GM12878 (cell line): ENCODE measurements at regions of chr15 and their contacts with region 1.

Region 1: DNA sequence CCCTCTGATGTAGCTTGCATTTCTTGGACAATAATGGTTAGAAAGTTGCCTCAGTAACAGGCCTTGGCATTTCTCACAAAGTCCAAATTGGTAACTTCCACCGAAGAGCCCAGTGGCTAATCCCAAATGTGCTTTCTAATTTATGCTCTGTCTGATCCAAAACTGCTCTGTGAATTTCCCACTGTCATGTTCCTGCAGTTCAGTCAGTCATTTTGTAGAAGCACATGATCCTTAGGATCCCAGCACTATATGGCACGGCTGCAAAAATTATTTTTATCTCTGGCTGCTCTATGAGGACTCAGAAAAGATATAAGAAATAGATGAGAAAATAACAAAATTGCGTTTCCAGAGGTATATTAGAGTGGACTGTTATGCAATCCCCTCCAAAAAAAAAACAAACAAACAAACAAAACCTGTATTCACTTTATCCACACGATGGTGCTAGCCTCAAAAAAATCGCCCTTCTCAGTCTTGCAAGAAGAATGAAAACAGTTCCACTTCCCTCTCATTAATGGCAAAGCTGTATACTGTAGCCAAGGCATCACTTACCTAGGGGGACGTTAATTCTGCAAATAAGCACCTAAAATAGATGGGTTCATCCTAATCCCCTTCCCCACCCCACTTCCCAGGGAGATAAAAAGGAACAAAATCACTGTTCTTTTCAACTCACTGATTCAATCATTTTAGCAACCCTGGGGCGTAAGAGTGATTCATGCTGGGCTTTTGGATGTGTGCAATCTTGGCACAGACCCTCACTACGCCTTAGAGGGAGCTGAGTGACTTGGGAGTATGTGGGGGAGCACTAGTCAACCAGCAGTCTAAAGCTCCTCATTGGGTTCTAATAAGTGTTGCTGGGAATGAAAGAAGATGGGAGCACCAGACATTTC is 61.3 kb downstream of the TMCO5A start:
- DNase-seq: peak; percentile 26
- ATAC-seq: peak; percentile 93
- H3K4me3 ChIP-seq: no peak overlapping the region
- H3K27ac ChIP-seq: no peak overlapping the region
- H3K4me1 ChIP-seq: no peaks in the 10 kb centered on the region
- H3K27me3 ChIP-seq: no peaks in the 10 kb centered on the region; a peak in 1 of 4 replicates
- CTCF ChIP-seq: peak; percentile 49 to 78 (median 54); a peak in 5 of 6 replicates
- EP300 ChIP-seq: no peak
- POLR2A ChIP-seq: no peak
- RAD21 ChIP-seq: peak; percentile 91

Region 2: GRCh38 chr15:38021259-38021658 is 25.6 kb after region 1 on chr15:
- CTCF ChIA-PET with region 1: interaction called, 11 read pairs
- POLR2A ChIA-PET with region 1: no interaction called
- RAD21 ChIA-PET with region 1: no interaction called
- SMC1A ChIA-PET with region 1: interaction called, 4 read pairs
- in situ Hi-C with region 1: no loop called
- intact Hi-C with region 1: no loop called
- DNase-seq: no peak
- ATAC-seq: peak; percentile 73
- H3K4me3 ChIP-seq: no peak overlapping the region
- H3K27ac ChIP-seq: no peak overlapping the region
- H3K4me1 ChIP-seq: no peaks in the 10 kb centered on the region
- H3K27me3 ChIP-seq: no peaks in the 10 kb centered on the region
- CTCF ChIP-seq: no peak
- EP300 ChIP-seq: peak; percentile 51 to 64; a peak in 3 of 4 replicates
- POLR2A ChIP-seq: no peak
- RAD21 ChIP-seq: no peak

Region 3: DNA sequence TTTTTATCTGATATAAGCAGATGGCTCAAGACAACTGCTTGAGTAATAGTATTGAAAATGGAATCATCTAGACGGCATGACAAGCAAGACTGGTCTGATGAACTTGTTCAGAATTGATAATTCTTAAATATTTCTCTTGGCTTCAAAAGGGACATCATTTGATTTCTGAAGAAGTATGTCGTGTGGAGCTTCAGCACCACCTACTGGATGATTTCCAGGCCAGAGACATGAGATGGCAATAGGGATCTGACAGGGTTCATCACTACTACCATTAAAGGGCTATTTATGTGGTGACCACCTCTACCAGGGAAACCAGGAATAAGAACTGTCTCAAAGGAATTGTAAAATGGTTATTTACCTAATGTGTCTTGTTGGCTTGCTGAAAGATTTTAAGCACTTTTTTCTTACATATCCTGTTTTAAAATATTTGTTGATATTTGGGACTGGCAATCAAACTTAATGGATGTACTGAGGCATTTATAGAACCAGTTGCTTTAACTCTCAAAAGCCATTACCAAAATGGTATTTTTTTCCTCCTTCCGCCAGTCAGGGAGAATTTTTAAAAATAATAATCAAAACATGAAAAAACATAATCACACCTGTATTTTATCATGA is 358.7 kb after region 1 on chr15:
- CTCF ChIA-PET with region 1: interaction called, 116 read pairs
- POLR2A ChIA-PET with region 1: no interaction called
- RAD21 ChIA-PET with region 1: interaction called, 71 read pairs
- SMC1A ChIA-PET with region 1: interaction called, 51 read pairs
- in situ Hi-C with region 1: no loop called
- intact Hi-C with region 1: loop called (anchors 1 kb)
- DNase-seq: peak; percentile 31
- ATAC-seq: peak; percentile 86
- H3K4me3 ChIP-seq: no peak overlapping the region
- H3K27ac ChIP-seq: no peak overlapping the region
- H3K4me1 ChIP-seq: no peaks in the 10 kb centered on the region
- H3K27me3 ChIP-seq: no peaks in the 10 kb centered on the region
- CTCF ChIP-seq: peak; percentile 73 to 89 (median 80); a peak in 4 of 6 replicates
- EP300 ChIP-seq: no peak
- POLR2A ChIP-seq: no peak
- RAD21 ChIP-seq: peak; percentile 98

Region 4: GRCh38 chr15:38424101-38424552 is 428.4 kb after region 1 on chr15:
- CTCF ChIA-PET with region 1: interaction called, 12 read pairs
- POLR2A ChIA-PET with region 1: no interaction called
- RAD21 ChIA-PET with region 1: interaction called, 4 read pairs
- SMC1A ChIA-PET with region 1: interaction called, 6 read pairs
- in situ Hi-C with region 1: no loop called
- intact Hi-C with region 1: no loop called
- DNase-seq: peak; percentile 48
- ATAC-seq: peak; percentile 79
- H3K4me3 ChIP-seq: peak overlapping the region; percentile 7; the same call in 1 of the 2 replicates
- H3K27ac ChIP-seq: no peak overlapping the region
- H3K4me1 ChIP-seq: peaks cover 5% of the 10 kb centered on the region; the same call in 1 of the 2 replicates
- H3K27me3 ChIP-seq: no peaks in the 10 kb centered on the region
- CTCF ChIP-seq: no peak
- EP300 ChIP-seq: no peak
- POLR2A ChIP-seq: no peak
- RAD21 ChIP-seq: no peak

Region 5: GRCh38 chr15:38652998-38653397 is 657.3 kb after region 1 on chr15:
- CTCF ChIA-PET with region 1: no interaction called
- POLR2A ChIA-PET with region 1: no interaction called
- RAD21 ChIA-PET with region 1: no interaction called
- SMC1A ChIA-PET with region 1: no interaction called
- in situ Hi-C with region 1: no loop called
- intact Hi-C with region 1: no loop called
- DNase-seq: no peak
- ATAC-seq: peak; percentile 48
- H3K4me3 ChIP-seq: no peak overlapping the region
- H3K27ac ChIP-seq: no peak overlapping the region
- H3K4me1 ChIP-seq: peaks cover 23% of the 10 kb centered on the region
- H3K27me3 ChIP-seq: no peaks in the 10 kb centered on the region
- CTCF ChIP-seq: 0 out of 6 replicates have a peak, but pooled peaks of 1 of the 3 experiments have one; percentile 6
- EP300 ChIP-seq: 0 out of 4 replicates have a peak, but pooled peaks of 1 of the 2 experiments have one; percentile 3
- POLR2A ChIP-seq: no peak
- RAD21 ChIP-seq: no peak